ENCODE measurements at regions of chr12 and their contacts with region 1.

Region 1: GRCh38 chr12:92078167-92079053 is 67.2 kb downstream of the BTG1 start:
- DNase-seq: no peak
- ATAC-seq: no peak
- H3K4me3 Mint-ChIP-seq: no peak overlapping the region
- H3K27ac Mint-ChIP-seq: no peak overlapping the region
- H3K4me1 Mint-ChIP-seq: peaks cover 51% of the 10 kb centered on the region
- H3K27me3 Mint-ChIP-seq: no peaks in the 10 kb centered on the region
- CTCF ChIP-seq: no peak

Region 2: GRCh38 chr12:92065018-92065499 is 13.4 kb before region 1 on chr12:
- CTCF ChIA-PET with region 1: no interaction called
- POLR2A ChIA-PET with region 1: no interaction called
- intact Hi-C with region 1: loop called (anchors 2 kb)
- DNase-seq: no peak
- ATAC-seq: peak; percentile 66
- H3K4me3 Mint-ChIP-seq: peak overlapping the region; percentile 73
- H3K27ac Mint-ChIP-seq: peak overlapping the region; percentile 85
- H3K4me1 Mint-ChIP-seq: peaks cover 61% of the 10 kb centered on the region
- H3K27me3 Mint-ChIP-seq: no peaks in the 10 kb centered on the region
- CTCF ChIP-seq: no peak

Region 3: GRCh38 chr12:92123780-92124688 is 45.6 kb after region 1 on chr12:
- CTCF ChIA-PET with region 1: no interaction called
- POLR2A ChIA-PET with region 1: no interaction called
- intact Hi-C with region 1: loop called (anchors 5 kb)
- DNase-seq: no peak
- ATAC-seq: no peak
- H3K4me3 Mint-ChIP-seq: peak overlapping the region; percentile 1
- H3K27ac Mint-ChIP-seq: peak overlapping the region; percentile 70
- H3K4me1 Mint-ChIP-seq: peaks cover 42% of the 10 kb centered on the region
- H3K27me3 Mint-ChIP-seq: no peaks in the 10 kb centered on the region
- CTCF ChIP-seq: no peak

Measured in activated B cell treated with CpG ODN at 0.5 μM for 24 hours (primary cell).